ENCODE measurements at regions of chr20 and their contacts with region 1.

Region 1: GRCh38 chr20:438571-439469 is 23.5 kb downstream of the TBC1D20 start:
- DNase-seq: peak; percentile 66 to 78 (median 75)
- H3K4me3 ChIP-seq: peak overlapping the region; percentile 26
- H3K4me3 Mint-ChIP-seq: peak overlapping the region; percentile 73 to 86 (median 82)
- H3K27ac ChIP-seq: no peak overlapping the region
- H3K27ac Mint-ChIP-seq: peak overlapping the region; percentile 14 to 91 (median 84)
- H3K4me1 ChIP-seq: peaks cover 53% of the 10 kb centered on the region
- H3K4me1 Mint-ChIP-seq: peaks cover 41 to 69% (median 55%) of the 10 kb centered on the region in 4 donors
- H3K27me3 ChIP-seq: no peaks in the 10 kb centered on the region
- H3K27me3 Mint-ChIP-seq: no peaks in the 10 kb centered on the region

Region 2: GRCh38 chr20:381581-382290 is 57.1 kb before region 1 on chr20:
- CTCF ChIA-PET with region 1: no interaction called
- POLR2A ChIA-PET with region 1: interaction called, 8 read pairs
- intact Hi-C with region 1: loop called (anchors 5 kb)
- DNase-seq: peak; percentile 60 to 81 (median 67)
- H3K4me3 ChIP-seq: peak overlapping the region; percentile 29 to 62
- H3K4me3 Mint-ChIP-seq: peak overlapping the region; percentile 79 to 89 (median 85)
- H3K27ac ChIP-seq: no peak overlapping the region
- H3K27ac Mint-ChIP-seq: peak overlapping the region; percentile 73 to 90 (median 84)
- H3K4me1 ChIP-seq: peaks cover 8% of the 10 kb centered on the region
- H3K4me1 Mint-ChIP-seq: peaks cover 5 to 20% (median 8%) of the 10 kb centered on the region in 4 donors
- H3K27me3 ChIP-seq: no peaks in the 10 kb centered on the region
- H3K27me3 Mint-ChIP-seq: no peaks in the 10 kb centered on the region

Region 3: GRCh38 chr20:478949-479429 is 40.2 kb after region 1 on chr20:
- CTCF ChIA-PET with region 1: interaction called, 6 read pairs
- POLR2A ChIA-PET with region 1: interaction called, 3 read pairs
- intact Hi-C with region 1: loop called (anchors 2 kb)
- DNase-seq: peak; percentile 43 to 72 (median 67)
- H3K4me3 ChIP-seq: no peak overlapping the region
- H3K4me3 Mint-ChIP-seq: no peak overlapping the region
- H3K27ac ChIP-seq: no peak overlapping the region
- H3K27ac Mint-ChIP-seq: peak overlapping the region in 4 of 7 donors; percentile 18 to 48 (median 28)
- H3K4me1 ChIP-seq: peaks cover 21% of the 10 kb centered on the region
- H3K4me1 Mint-ChIP-seq: peaks cover 16 to 28% (median 20%) of the 10 kb centered on the region in 4 donors
- H3K27me3 ChIP-seq: no peaks in the 10 kb centered on the region
- H3K27me3 Mint-ChIP-seq: no peaks in the 10 kb centered on the region

Measured in CD4-positive, alpha-beta memory T cell (primary cell).